ENCODE measurements at regions of chr9 and their contacts with region 1.

Region 1: DNA sequence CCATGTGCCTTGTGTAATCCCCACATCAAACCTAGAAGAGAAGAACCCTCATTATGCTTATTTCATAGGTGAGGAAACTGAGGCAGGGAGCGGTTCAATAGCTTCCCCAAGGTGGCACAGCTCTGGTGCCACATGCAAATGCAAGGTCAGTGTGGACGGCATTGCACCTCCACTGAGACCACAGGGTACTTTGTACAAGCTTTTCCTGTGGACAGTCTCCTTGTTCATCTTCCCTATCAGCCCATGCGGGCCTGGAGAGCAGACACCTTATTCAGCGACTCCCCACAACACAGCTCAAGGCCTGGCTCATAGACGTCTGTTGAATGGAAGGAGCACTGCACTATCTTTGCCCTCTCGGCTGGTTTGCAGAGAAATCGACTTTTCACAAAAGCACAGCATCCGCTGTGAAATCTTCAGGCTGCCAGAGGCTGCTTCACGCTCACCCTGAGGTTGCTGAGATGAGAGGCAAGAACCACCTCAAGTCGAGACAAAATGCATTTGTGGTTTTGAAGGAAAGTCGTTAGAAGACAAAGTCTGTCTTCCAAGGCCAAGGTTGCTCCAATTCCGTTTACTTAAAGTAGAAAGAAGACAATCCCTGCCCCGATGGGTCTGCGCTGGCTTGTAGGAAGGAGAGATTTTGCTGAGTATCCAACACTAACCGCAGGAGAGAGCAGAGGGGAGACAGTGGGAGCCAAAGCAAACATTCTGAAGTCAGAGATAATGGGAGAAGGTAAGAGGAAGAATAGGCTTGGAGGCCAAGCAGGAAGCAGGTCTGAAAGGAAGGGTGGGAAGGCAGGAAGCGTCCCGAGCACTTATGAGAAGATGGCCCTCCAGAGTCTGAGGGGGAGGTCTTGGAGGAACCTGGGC is 34.2 kb upstream of the STRBP start:
- DNase-seq: no peak
- ATAC-seq: no peak
- H3K4me3 Mint-ChIP-seq: no peak overlapping the region
- H3K27ac Mint-ChIP-seq: no peak overlapping the region
- H3K4me1 Mint-ChIP-seq: peaks cover 14% of the 10 kb centered on the region
- H3K27me3 Mint-ChIP-seq: no peaks in the 10 kb centered on the region
- CTCF ChIP-seq: no peak

Region 2: GRCh38 chr9:122350638-122351355 is 951.8 kb before region 1 on chr9:
- CTCF ChIA-PET with region 1: no interaction called
- POLR2A ChIA-PET with region 1: no interaction called
- intact Hi-C with region 1: no loop called
- DNase-seq: peak; percentile 75
- ATAC-seq: peak; percentile 90
- H3K4me3 Mint-ChIP-seq: no peak overlapping the region
- H3K27ac Mint-ChIP-seq: no peak overlapping the region
- H3K4me1 Mint-ChIP-seq: peaks cover 8% of the 10 kb centered on the region
- H3K27me3 Mint-ChIP-seq: peaks cover 35% of the 10 kb centered on the region
- CTCF ChIP-seq: no peak

Region 3: DNA sequence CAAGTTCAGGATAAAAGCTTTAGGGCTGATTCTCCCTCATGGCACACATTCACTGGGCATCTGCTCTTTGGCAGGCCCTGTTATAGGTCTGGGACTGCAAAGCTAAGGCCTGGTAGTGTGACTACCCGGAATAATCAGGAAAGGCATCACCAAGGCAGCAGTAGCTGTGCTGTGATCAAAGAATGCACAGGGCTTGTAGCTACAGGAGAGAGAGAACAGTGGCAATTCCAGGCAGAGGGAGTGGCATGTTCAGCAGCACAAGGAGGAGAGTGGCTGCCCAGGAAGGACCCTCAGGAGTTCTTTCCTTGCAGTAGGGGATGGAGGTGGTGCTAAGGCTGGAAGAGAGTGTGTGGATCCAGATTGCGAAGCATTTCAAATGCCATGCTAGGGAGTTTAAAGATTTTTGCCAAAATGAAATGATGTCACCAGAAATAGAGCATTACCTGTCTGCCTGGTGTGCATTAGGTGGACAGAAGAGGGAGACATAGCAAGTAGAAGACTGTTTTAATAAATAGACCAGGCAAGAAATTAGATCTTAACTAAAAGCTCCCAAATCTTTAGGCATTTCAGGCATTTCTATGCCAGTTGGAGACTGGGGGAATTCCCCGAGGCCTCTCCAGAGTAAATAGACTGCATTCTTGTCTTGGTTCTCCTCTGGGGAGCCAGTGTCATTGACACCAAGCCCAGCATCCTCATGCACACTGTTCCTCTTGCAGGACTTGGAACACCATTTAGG is 200.0 kb before region 1 on chr9:
- CTCF ChIA-PET with region 1: no interaction called
- POLR2A ChIA-PET with region 1: no interaction called
- intact Hi-C with region 1: no loop called
- DNase-seq: no peak
- ATAC-seq: peak; percentile 34
- H3K4me3 Mint-ChIP-seq: no peak overlapping the region
- H3K27ac Mint-ChIP-seq: peak overlapping the region; percentile 71
- H3K4me1 Mint-ChIP-seq: peaks cover 12% of the 10 kb centered on the region
- H3K27me3 Mint-ChIP-seq: no peaks in the 10 kb centered on the region
- CTCF ChIP-seq: no peak

Region 4: GRCh38 chr9:123322273-123323195 is 20.0 kb after region 1 on chr9:
- CTCF ChIA-PET with region 1: interaction called, 3 read pairs
- POLR2A ChIA-PET with region 1: interaction called, 5 read pairs
- intact Hi-C with region 1: loop called (anchors 1 kb)
- DNase-seq: peak; percentile 53
- ATAC-seq: peak; percentile 79
- H3K4me3 Mint-ChIP-seq: peak overlapping the region; percentile 75
- H3K27ac Mint-ChIP-seq: peak overlapping the region; percentile 94
- H3K4me1 Mint-ChIP-seq: peaks cover 90% of the 10 kb centered on the region
- H3K27me3 Mint-ChIP-seq: no peaks in the 10 kb centered on the region
- CTCF ChIP-seq: no peak

Region 5: GRCh38 chr9:123631862-123632261 is 329.3 kb after region 1 on chr9:
- CTCF ChIA-PET with region 1: no interaction called
- POLR2A ChIA-PET with region 1: no interaction called
- intact Hi-C with region 1: no loop called
- DNase-seq: no peak
- ATAC-seq: no peak
- H3K4me3 Mint-ChIP-seq: no peak overlapping the region
- H3K27ac Mint-ChIP-seq: no peak overlapping the region
- H3K4me1 Mint-ChIP-seq: no peaks in the 10 kb centered on the region
- H3K27me3 Mint-ChIP-seq: no peaks in the 10 kb centered on the region
- CTCF ChIP-seq: no peak

Measured in activated B cell treated with CpG ODN at 0.5 μM for 24 hours (primary cell).